A673 (cell line): ENCODE measurements at regions of chr12 and their contacts with region 1.

Region 1: GRCh38 chr12:110957652-110958051 is 37.3 kb upstream of the MYL2 start:
- DNase-seq: no peak
- H3K4me3 ChIP-seq: no peak overlapping the region
- H3K27ac ChIP-seq: no peak overlapping the region
- H3K4me1 ChIP-seq: no peaks in the 10 kb centered on the region
- H3K27me3 ChIP-seq: peaks cover 4% of the 10 kb centered on the region
- CTCF ChIP-seq: no peak

Region 2: GRCh38 chr12:110917466-110917865 is 40.2 kb before region 1 on chr12:
- CTCF ChIA-PET with region 1: no interaction called
- POLR2A ChIA-PET with region 1: interaction called, 11 read pairs
- intact Hi-C with region 1: no loop called
- DNase-seq: peak; percentile 60
- H3K4me3 ChIP-seq: no peak overlapping the region
- H3K27ac ChIP-seq: no peak overlapping the region
- H3K4me1 ChIP-seq: no peaks in the 10 kb centered on the region
- H3K27me3 ChIP-seq: no peaks in the 10 kb centered on the region
- CTCF ChIP-seq: no peak